Body of pancreas (tissue), 4 donors: ENCODE measurements at regions of chrX and their contacts with region 1.

Region 1: DNA sequence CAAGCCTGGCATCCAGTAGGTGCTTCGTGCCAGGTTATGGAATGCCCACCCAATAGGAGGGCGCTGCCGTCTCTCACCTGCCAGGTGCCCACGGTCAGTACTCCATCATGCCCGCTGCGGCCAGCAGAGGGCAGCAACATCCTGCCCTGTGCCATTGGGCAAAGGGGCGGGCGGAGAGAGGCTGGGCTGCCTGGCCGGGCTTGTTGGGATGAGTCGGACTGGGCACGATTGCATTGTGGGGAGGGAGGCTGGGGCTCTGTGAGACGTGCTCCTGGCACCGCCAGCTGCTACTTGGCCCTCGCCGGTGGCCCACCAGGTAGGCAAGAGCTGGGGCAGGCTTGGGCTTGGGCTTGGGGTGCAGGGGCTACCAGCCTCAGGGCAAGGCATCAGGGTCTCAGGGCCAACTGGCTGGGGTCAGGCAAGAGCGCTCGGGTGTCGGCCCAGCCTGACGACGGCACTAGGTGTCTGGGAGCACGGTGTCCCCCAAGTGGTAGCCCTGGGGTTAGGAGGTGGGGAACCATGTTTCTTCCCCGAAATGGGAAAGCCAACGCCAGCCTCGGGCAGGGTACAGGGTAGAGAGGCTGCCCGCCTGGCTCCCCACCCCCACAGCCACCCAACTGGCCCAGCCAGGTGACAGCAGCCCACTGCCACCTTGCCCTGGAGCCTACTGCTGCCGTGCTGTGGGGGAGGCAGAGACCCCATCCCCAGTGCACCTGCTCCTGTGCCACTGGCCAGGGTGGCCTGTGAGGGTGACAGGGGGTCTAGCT is at the start of gene PLXNB3:
- DNase-seq: peak; percentile 78 to 88 (median 84)
- ATAC-seq: peak; percentile 88
- H3K4me3 ChIP-seq: no peak within 1 kb of the TSS
- H3K27ac ChIP-seq: peak within 1 kb of the TSS in 3 of 4 donors; percentile 38 to 65 (median 50)
- H3K4me1 ChIP-seq: peaks cover 13% of the 10 kb centered on the region
- H3K27me3 ChIP-seq: no peaks in the 10 kb centered on the region
- CTCF ChIP-seq: peak; percentile 59 to 88 (median 76)
- POLR2A ChIP-seq: peak in 1 of 3 donors; percentile 26
- total RNA-seq, gene PLXNB3: 4.2 to 13.2 TPM

Region 2: GRCh38 chrX:153599192-153600031 is 164.8 kb before region 1 on chrX:
- intact Hi-C with region 1: no loop called
- DNase-seq: peak; percentile 90 to 94 (median 92)
- ATAC-seq: peak; percentile 98
- H3K4me3 ChIP-seq: peak overlapping the region in 1 of 2 donors; percentile 39
- H3K27ac ChIP-seq: peak overlapping the region in 3 of 4 donors; percentile 50 to 79 (median 75)
- H3K4me1 ChIP-seq: peaks cover 23% of the 10 kb centered on the region
- H3K27me3 ChIP-seq: no peaks in the 10 kb centered on the region
- CTCF ChIP-seq: peak in 1 of 7 experiments; percentile 14
- POLR2A ChIP-seq: peak in 2 of 3 donors; percentile 28 to 40

Region 3: DNA sequence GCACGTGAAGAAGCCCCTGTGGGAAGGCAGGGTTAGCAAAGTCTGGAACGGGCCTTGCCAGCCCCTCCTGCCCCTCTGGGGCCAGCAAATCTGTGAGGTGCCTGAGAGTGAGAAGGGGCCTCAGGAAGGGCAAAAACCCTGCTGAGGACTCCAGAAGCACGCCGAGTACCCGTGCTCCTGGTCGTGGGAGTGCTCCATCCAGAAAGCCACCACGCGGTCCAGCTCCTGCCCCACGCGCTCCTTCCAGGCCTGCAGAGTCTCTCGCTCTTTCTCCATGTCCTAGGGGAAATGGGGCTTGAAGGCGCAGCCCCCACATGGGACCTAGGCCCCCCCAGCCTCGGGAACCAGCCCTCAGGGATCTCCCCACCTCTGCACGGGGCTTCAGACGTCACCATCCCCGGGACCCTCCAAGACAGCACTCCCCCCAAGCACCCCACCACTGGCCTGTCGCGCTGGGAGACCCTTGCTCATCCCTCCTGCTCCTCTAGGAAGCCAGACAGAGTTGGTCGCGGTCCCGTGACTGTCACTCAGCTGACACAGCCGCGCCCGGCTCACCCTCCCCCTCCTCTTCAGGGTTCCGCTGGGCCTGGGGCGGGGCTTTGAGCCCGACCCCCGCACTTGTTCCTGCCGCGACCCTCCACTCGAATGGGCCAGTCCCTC is 180.1 kb after region 1 on chrX and contains the start of gene RENBP:
- intact Hi-C with region 1: loop called (anchors 5 kb)
- DNase-seq: peak in 1 of 4 donors; percentile 35
- ATAC-seq: no peak
- H3K4me3 ChIP-seq: no peak within 1 kb of the TSS
- H3K27ac ChIP-seq: no peak within 1 kb of the TSS
- H3K4me1 ChIP-seq: no peaks in the 10 kb centered on the region
- H3K27me3 ChIP-seq: no peaks in the 10 kb centered on the region
- CTCF ChIP-seq: no peak
- POLR2A ChIP-seq: no peak
- total RNA-seq, gene RENBP: 0.66 to 6.0 TPM

Region 4: GRCh38 chrX:153953342-153953830 is 189.2 kb after region 1 on chrX:
- intact Hi-C with region 1: loop called (anchors 5 kb)
- DNase-seq: peak; percentile 49 to 71 (median 68)
- ATAC-seq: peak; percentile 82
- H3K4me3 ChIP-seq: no peak overlapping the region
- H3K27ac ChIP-seq: no peak overlapping the region
- H3K4me1 ChIP-seq: no peaks in the 10 kb centered on the region
- H3K27me3 ChIP-seq: no peaks in the 10 kb centered on the region
- CTCF ChIP-seq: peak; percentile 75 to 93 (median 86)
- POLR2A ChIP-seq: no peak